ENCODE measurements at regions of chr11 and their contacts with region 1.

Region 1: GRCh38 chr11:78645226-78646202 is 70.8 kb upstream of the NARS2 start:
- DNase-seq: peak; percentile 76 to 81 (median 77)
- ATAC-seq: peak; percentile 93
- H3K4me3 ChIP-seq: no peak overlapping the region
- H3K27ac ChIP-seq: no peak overlapping the region
- H3K4me1 ChIP-seq: no peaks in the 10 kb centered on the region
- H3K27me3 ChIP-seq: peaks cover 0 to 7% of the 10 kb centered on the region in 2 experiments; a peak in 1 of 5 replicates
- CTCF ChIP-seq: peak; percentile 86 to 94 (median 93)
- EP300 ChIP-seq: no peak
- POLR2A ChIP-seq: no peak
- RAD21 ChIP-seq: peak; percentile 83 to 88

Region 2: DNA sequence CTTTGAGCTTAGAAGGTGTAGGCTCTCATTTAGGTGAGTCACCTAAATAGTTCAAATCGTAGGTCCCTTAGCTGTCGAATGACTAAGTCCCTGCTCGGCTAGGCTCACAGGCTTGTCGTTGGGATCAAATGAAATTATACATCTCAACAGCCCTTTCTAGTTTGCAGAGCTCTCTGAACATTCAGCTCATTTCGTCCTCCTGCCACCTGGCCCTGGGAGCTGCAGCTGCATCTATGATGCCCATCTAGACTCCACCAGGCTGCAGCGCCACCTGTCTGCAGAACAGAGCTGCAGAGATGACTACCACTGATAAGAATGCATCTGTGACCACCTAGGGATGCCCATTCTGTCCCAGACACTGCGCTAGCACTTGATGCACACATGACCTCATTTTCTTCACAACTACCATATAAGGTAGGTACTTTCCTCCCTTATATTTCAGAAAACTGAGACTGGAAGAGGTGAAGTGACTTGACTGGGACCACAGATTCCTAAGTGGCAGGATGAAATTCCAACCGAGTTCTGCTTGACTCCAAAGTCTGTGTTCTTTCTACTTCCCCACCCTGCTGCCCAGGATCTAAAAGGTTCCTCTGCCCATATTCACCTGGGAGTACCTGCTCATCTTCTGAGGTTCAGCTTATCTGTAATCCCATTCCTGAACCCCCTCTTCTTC is 70.3 kb after region 1 on chr11:
- CTCF ChIA-PET with region 1: interaction called, 8 read pairs
- POLR2A ChIA-PET with region 1: no interaction called
- in situ Hi-C with region 1: no loop called
- intact Hi-C with region 1: loop called (anchors 1 kb)
- DNase-seq: peak; percentile 59 to 74 (median 66)
- ATAC-seq: peak; percentile 89
- H3K4me3 ChIP-seq: no peak overlapping the region
- H3K27ac ChIP-seq: no peak overlapping the region
- H3K4me1 ChIP-seq: no peaks in the 10 kb centered on the region
- H3K27me3 ChIP-seq: no peaks in the 10 kb centered on the region; a peak in 1 of 5 replicates
- CTCF ChIP-seq: peak; percentile 84 to 88 (median 86)
- EP300 ChIP-seq: no peak
- POLR2A ChIP-seq: no peak
- RAD21 ChIP-seq: peak; percentile 56 to 66

Region 3: GRCh38 chr11:78798660-78799059 is 153.1 kb after region 1 on chr11:
- CTCF ChIA-PET with region 1: no interaction called
- POLR2A ChIA-PET with region 1: no interaction called
- in situ Hi-C with region 1: no loop called
- intact Hi-C with region 1: loop called (anchors 10 kb)
- DNase-seq: peak; percentile 62 to 75 (median 65)
- ATAC-seq: peak; percentile 100
- H3K4me3 ChIP-seq: no peak overlapping the region
- H3K27ac ChIP-seq: no peak overlapping the region
- H3K4me1 ChIP-seq: no peaks in the 10 kb centered on the region
- H3K27me3 ChIP-seq: peaks cover 0 to 6% of the 10 kb centered on the region in 2 experiments; a peak in 1 of 5 replicates
- CTCF ChIP-seq: peak; percentile 76 to 85 (median 79)
- EP300 ChIP-seq: no peak
- POLR2A ChIP-seq: no peak
- RAD21 ChIP-seq: peak; percentile 44 to 66; a peak in 3 of 4 replicates

Region 4: DNA sequence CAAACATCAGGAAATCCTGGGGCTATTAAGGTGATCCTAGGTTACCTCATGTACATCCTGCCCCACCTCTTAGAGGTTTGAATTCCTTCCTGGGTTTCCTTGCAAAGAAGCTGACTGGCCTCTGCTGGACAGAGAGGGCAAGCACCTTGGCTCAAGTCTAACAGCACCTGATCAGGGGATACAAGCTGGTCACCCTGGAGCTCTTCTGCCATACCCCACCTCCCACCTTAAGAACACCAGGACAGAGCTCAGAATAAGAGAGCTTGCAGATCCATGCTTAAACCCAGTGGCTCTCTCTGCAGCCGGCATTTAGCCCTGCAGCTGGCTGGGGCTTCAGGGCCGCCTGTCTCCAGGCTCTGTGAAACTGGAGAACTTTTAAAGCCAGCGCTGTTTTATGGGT is 315.7 kb after region 1 on chr11:
- CTCF ChIA-PET with region 1: no interaction called
- POLR2A ChIA-PET with region 1: no interaction called
- in situ Hi-C with region 1: no loop called
- intact Hi-C with region 1: loop called (anchors 1 kb)
- DNase-seq: peak; percentile 16 to 24 (median 20)
- ATAC-seq: peak; percentile 82
- H3K4me3 ChIP-seq: no peak overlapping the region
- H3K27ac ChIP-seq: no peak overlapping the region
- H3K4me1 ChIP-seq: no peaks in the 10 kb centered on the region
- H3K27me3 ChIP-seq: peaks cover 0 to 7% of the 10 kb centered on the region in 2 experiments; a peak in 2 of 5 replicates
- CTCF ChIP-seq: peak; percentile 40 to 54 (median 48); a peak in 5 of 6 replicates
- EP300 ChIP-seq: no peak
- POLR2A ChIP-seq: no peak
- RAD21 ChIP-seq: peak; percentile 47 to 57

Region 5: DNA sequence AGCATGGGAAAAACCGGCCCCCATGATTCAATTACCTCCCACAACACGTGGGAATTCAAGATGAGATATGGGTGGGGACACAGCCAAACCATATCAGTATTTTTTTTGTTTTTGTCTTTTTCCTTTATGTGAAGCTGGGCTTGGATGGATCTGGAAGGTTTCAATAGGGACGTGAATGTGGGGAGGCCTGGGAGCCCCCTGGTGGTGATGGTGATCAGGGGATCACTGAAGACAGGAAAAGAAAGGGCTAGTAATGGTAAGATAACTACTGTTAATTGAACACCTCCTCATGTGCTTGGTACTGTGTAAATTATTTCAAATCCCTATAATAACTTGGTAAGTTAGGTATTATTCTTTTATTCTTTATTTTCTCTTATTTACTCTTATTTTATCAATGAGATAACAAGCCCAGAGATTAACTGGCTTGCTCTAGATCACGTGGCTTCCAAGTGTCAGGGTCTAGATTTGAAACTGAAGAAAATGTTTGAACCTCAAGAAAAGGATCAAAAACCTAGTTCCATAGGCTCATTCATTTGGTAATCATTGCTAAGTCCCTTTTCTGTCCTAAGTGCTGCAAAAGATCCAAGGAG is 431.1 kb after region 1 on chr11:
- CTCF ChIA-PET with region 1: interaction called, 3 read pairs
- POLR2A ChIA-PET with region 1: interaction called, 3 read pairs
- in situ Hi-C with region 1: no loop called
- intact Hi-C with region 1: loop called (anchors 5 kb)
- DNase-seq: peak; percentile 51 to 55 (median 54)
- ATAC-seq: peak; percentile 83
- H3K4me3 ChIP-seq: no peak overlapping the region
- H3K27ac ChIP-seq: no peak overlapping the region
- H3K4me1 ChIP-seq: no peaks in the 10 kb centered on the region
- H3K27me3 ChIP-seq: peaks cover 0 to 7% of the 10 kb centered on the region in 2 experiments; a peak in 1 of 5 replicates
- CTCF ChIP-seq: peak; percentile 31 to 64 (median 63); a peak in 5 of 6 replicates
- EP300 ChIP-seq: no peak
- POLR2A ChIP-seq: no peak
- RAD21 ChIP-seq: peak; percentile 40 to 41

Region 6: DNA sequence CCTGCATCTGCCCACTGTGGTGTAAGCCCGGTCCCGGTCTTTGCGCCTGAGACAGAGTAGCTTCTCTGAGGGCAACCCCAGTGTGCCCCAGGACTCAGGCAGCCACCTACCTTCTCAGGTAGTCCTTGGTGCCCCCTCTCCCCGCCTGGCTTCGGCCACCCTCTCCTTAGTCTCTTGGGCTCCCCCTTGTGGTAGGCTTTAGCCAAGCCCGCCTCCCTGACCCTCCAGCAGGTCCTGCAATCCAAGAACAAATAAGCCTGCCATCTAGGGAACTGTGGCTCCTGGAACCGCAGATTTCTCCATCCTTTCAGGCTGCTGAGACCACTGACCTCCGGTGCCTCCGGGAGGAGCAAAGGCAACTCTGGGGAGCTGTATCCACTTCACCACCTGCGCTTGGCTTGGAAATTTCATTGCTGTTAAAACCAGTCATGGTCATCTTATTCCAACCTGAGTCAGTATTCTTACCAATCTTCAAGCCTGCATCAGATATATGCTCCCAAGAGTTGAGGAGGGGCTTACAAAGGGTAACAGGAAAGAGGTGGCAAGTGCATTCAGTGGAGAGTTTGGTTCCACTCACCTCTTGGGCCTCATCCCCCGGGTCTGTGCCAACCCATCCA is 848.1 kb after region 1 on chr11:
- CTCF ChIA-PET with region 1: no interaction called
- POLR2A ChIA-PET with region 1: no interaction called
- in situ Hi-C with region 1: no loop called
- intact Hi-C with region 1: loop called (anchors 2 kb)
- DNase-seq: peak; percentile 66 to 84 (median 78)
- ATAC-seq: peak; percentile 96
- H3K4me3 ChIP-seq: no peak overlapping the region
- H3K27ac ChIP-seq: no peak overlapping the region
- H3K4me1 ChIP-seq: no peaks in the 10 kb centered on the region; a peak in 1 of 5 replicates
- H3K27me3 ChIP-seq: no peaks in the 10 kb centered on the region; a peak in 1 of 5 replicates
- CTCF ChIP-seq: peak; percentile 70 to 83 (median 75)
- EP300 ChIP-seq: no peak
- POLR2A ChIP-seq: no peak
- RAD21 ChIP-seq: peak; percentile 38 to 55; a peak in 3 of 4 replicates